ENCODE measurements at regions of chr1 and their contacts with region 1.

Region 1: GRCh38 chr1:100767176-100767890 is 47.8 kb downstream of the VCAM1 start:
- DNase-seq: peak; percentile 4
- H3K4me3 ChIP-seq: no peak overlapping the region
- H3K27ac ChIP-seq: no peak overlapping the region
- H3K4me1 ChIP-seq: no peaks in the 10 kb centered on the region
- H3K27me3 ChIP-seq: no peaks in the 10 kb centered on the region
- CTCF ChIP-seq: no peak

Region 2: DNA sequence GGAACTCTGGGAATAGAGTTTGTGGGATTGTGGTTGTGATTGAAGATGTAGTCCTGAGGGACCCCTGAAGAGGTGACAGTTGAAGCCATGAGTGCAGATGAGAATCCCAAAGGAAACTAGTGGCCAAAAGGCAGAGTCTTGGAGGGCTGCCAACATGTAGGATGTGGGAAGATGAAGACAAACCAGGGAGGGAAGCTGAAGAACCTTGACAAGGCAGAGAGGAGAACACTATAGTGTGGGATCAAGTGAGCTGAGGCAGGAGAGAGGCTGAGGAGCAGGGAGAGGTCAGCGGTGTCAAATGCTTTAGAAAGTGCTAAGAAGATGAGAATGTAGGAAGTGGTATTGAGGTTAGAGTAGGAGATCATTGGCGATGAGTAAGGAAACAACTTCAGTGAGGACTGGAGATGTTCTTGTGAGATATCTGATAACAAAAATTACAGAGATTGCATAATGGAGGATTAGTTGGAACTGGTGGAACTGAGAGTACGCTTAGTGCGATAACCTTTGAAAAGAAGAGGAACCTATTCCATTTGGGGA is 136.2 kb before region 1 on chr1:
- CTCF ChIA-PET with region 1: no interaction called
- POLR2A ChIA-PET with region 1: no interaction called
- intact Hi-C with region 1: no loop called
- DNase-seq: no peak
- H3K4me3 ChIP-seq: no peak overlapping the region
- H3K27ac ChIP-seq: no peak overlapping the region
- H3K4me1 ChIP-seq: no peaks in the 10 kb centered on the region
- H3K27me3 ChIP-seq: no peaks in the 10 kb centered on the region
- CTCF ChIP-seq: no peak

Region 3: DNA sequence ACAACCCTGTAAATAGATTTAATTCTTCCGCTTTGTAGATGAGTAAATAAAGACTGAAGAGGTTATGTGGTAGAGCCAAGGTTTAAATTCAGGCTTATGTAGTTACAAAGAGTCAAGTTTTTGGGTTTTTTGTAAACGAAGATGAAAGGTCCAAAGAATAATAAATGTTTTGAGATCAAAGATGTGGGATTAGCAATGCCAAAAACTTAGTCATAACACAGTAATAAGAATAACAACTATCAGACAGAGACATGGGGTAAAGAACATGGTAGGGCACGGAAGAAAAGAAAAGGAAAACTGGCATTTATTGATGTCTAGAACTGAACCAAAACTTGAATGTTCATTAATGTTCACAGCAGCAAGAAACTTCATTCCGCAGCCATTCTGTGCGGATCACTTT is 84.4 kb after region 1 on chr1:
- CTCF ChIA-PET with region 1: no interaction called
- POLR2A ChIA-PET with region 1: no interaction called
- intact Hi-C with region 1: no loop called
- DNase-seq: no peak
- H3K4me3 ChIP-seq: no peak overlapping the region
- H3K27ac ChIP-seq: no peak overlapping the region
- H3K4me1 ChIP-seq: no peaks in the 10 kb centered on the region
- H3K27me3 ChIP-seq: no peaks in the 10 kb centered on the region
- CTCF ChIP-seq: no peak

Region 4: GRCh38 chr1:100883963-100884362 is 116.6 kb after region 1 on chr1:
- CTCF ChIA-PET with region 1: no interaction called
- POLR2A ChIA-PET with region 1: interaction called, 13 read pairs
- intact Hi-C with region 1: no loop called
- DNase-seq: peak; percentile 72
- H3K4me3 ChIP-seq: no peak overlapping the region
- H3K27ac ChIP-seq: no peak overlapping the region
- H3K4me1 ChIP-seq: peaks cover 8% of the 10 kb centered on the region
- H3K27me3 ChIP-seq: no peaks in the 10 kb centered on the region
- CTCF ChIP-seq: peak; percentile 38; the same call in 1 of the 2 replicates

Measured in A673 (cell line).